Lower leg skin (tissue), 4 donors: ENCODE measurements at regions of chr1 and their contacts with region 1.

Region 1: DNA sequence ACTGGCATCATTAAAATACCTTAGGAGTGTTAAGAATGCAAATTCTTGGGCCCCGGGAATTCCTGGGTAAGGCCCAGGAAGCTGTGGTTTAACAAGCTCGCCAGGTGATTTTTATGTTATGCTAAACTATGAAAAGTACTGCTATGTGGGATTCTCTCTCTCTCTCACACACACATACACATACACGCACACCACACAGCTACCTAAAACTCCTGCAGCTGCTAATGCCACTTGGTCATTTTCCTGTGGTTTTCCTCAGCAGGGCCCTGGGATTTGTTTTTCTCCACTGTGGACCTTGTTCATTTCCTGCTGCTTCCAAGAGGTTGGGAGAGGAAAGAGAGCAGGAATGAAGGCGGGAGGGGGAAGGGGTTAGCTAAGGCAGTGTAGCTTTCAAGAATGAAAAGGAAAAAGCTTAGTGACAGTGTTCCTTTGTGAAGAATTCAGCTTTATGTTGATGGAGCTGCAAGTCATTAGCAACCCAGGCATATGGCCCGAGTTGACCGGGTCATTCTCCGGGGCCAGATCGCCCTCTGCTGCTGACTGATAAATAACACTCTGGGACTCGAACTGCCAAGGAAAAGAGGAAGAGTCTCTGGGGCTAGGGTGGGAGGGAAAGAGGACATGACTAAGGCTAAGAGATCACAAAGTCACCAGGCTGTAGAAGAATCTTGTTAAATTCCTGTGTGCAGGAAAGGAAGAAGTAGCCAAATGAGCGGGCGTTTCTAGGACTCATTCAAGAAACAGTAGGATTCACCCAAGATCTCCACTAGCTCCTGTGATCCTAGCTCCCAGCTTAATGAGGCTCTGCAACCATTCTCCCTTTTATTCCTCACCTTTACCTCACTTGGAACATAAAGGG is 30.5 kb upstream of the LRIG2 start:
- DNase-seq: peak; percentile 69 to 93
- H3K4me3 ChIP-seq: no peak overlapping the region
- CTCF ChIP-seq: no peak
- POLR2A ChIP-seq: no peak

Region 2: GRCh38 chr1:112882271-112882744 is 160.2 kb before region 1 on chr1:
- intact Hi-C with region 1: loop called (anchors 10 kb)
- DNase-seq: peak in 1 of 2 donors; percentile 75
- H3K4me3 ChIP-seq: no peak overlapping the region
- CTCF ChIP-seq: no peak
- POLR2A ChIP-seq: no peak